ENCODE measurements at regions of chr14 and their contacts with region 1.

Region 1: GRCh38 chr14:95569440-95569839 is 34.6 kb downstream of the GLRX5 start:
- DNase-seq: no peak
- H3K4me3 ChIP-seq: no peak overlapping the region
- H3K27ac ChIP-seq: no peak overlapping the region
- H3K4me1 ChIP-seq: no peaks in the 10 kb centered on the region
- H3K27me3 ChIP-seq: no peaks in the 10 kb centered on the region
- CTCF ChIP-seq: no peak
- EP300 ChIP-seq: no peak
- POLR2A ChIP-seq: no peak

Region 2: GRCh38 chr14:95534299-95535225 is 34.9 kb before region 1 on chr14 and contains the start of gene GLRX5:
- intact Hi-C with region 1: no loop called
- DNase-seq: peak; percentile 97 to 99 (median 98)
- H3K4me3 ChIP-seq: peak within 1 kb of the TSS; percentile 85
- H3K27ac ChIP-seq: peak within 1 kb of the TSS; percentile 64 to 71
- H3K4me1 ChIP-seq: peaks cover 23% of the 10 kb centered on the region
- H3K27me3 ChIP-seq: no peaks in the 10 kb centered on the region
- CTCF ChIP-seq: no peak
- EP300 ChIP-seq: no peak
- POLR2A ChIP-seq: peak; percentile 57
- total RNA-seq, gene GLRX5: 38.0 to 49.2 (median 41.7) TPM

Region 3: GRCh38 chr14:95585953-95586620 is 16.6 kb after region 1 on chr14:
- intact Hi-C with region 1: loop called in 1 of 4 experiments (anchors 2 kb)
- DNase-seq: no peak
- H3K4me3 ChIP-seq: no peak overlapping the region
- H3K27ac ChIP-seq: no peak overlapping the region
- H3K4me1 ChIP-seq: no peaks in the 10 kb centered on the region
- H3K27me3 ChIP-seq: no peaks in the 10 kb centered on the region
- CTCF ChIP-seq: no peak
- EP300 ChIP-seq: no peak
- POLR2A ChIP-seq: no peak